ENCODE measurements at regions of chr6 and their contacts with region 1.

Region 1: GRCh38 chr6:99547524-99547923 is 20.9 kb downstream of the CCNC start:
- DNase-seq: no peak
- H3K4me3 ChIP-seq: no peak overlapping the region
- H3K27ac ChIP-seq: no peak overlapping the region
- H3K4me1 ChIP-seq: peaks cover 0 to 2% (median 0%) of the 10 kb centered on the region in 4 experiments
- H3K27me3 ChIP-seq: no peaks in the 10 kb centered on the region

Region 2: GRCh38 chr6:99568103-99568933 is 20.8 kb after region 1 on chr6 and contains the start of gene CCNC:
- CTCF ChIA-PET with region 1: interaction called, 10 read pairs
- POLR2A ChIA-PET with region 1: no interaction called
- DNase-seq: peak; percentile 97 to 98 (median 97)
- H3K4me3 ChIP-seq: peak within 1 kb of the TSS; percentile 85 to 99 (median 96)
- H3K27ac ChIP-seq: peak within 1 kb of the TSS; percentile 89 to 95
- H3K4me1 ChIP-seq: peaks cover 4 to 22% (median 10%) of the 10 kb centered on the region in 4 experiments
- H3K27me3 ChIP-seq: no peaks in the 10 kb centered on the region